Activated CD8-positive, alpha-beta T cell treated with anti-CD3 and anti-CD28 coated beads for 36 hours (primary cell): ENCODE measurements at regions of chr1 and their contacts with region 1.

Region 1: DNA sequence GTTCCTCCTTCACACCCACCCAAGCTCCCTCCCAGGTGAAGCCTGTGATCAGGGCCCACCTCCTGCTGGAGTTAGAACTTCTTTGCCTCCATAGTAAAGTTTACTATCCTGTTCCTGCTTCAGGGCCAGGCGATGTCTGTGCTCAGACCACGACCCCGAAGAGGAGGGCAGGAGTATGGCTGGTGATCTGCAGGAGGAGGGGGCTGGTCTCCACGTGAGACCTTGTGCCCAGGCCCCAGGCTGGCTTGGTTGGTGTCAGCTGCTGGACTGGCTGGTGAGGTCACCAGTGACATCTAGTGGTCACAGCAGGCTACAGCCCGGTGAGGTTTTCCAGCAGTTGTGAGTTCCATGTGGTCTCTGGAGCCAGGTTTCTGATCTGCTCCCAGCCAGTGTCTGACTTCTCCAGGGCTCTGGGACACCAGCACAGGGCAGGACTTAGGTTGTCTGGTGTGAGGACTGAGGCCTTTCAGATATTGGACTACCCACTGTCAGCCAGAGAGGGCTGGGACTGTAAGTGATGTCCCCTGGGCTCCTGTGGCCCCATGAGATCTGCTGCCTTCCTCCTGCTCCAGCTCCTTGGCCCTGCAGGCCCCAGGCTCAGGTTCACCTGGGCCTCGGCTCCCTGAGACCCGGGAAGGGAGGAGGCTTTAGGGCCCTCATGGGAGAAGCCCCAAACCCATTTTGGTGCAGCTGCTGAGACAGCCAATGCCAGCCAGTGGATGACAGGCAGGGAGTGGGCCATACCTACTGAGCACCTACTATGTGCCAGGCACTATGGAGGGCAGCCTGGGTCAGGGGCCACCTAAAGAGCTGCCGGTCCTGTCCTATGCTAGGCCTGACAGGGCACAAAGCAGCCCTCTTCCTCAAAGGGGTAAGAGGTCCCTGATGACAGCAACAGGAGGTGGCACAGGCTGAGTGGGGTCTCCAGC is 6.0 kb upstream of the UBL4B start:
- DNase-seq: peak; percentile 69
- ATAC-seq: peak; percentile 94
- H3K4me3 Mint-ChIP-seq: no peak overlapping the region
- H3K27ac Mint-ChIP-seq: no peak overlapping the region
- H3K4me1 Mint-ChIP-seq: no peaks in the 10 kb centered on the region
- H3K27me3 Mint-ChIP-seq: peaks cover 5% of the 10 kb centered on the region
- CTCF ChIP-seq: peak; percentile 82

Region 2: GRCh38 chr1:110047471-110047870 is 58.8 kb before region 1 on chr1:
- CTCF ChIA-PET with region 1: interaction called, 251 read pairs
- POLR2A ChIA-PET with region 1: interaction called, 3 read pairs
- intact Hi-C with region 1: loop called (anchors 5 kb)
- DNase-seq: no peak
- ATAC-seq: no peak
- H3K4me3 Mint-ChIP-seq: no peak overlapping the region
- H3K27ac Mint-ChIP-seq: no peak overlapping the region
- H3K4me1 Mint-ChIP-seq: no peaks in the 10 kb centered on the region
- H3K27me3 Mint-ChIP-seq: no peaks in the 10 kb centered on the region
- CTCF ChIP-seq: no peak

Region 3: DNA sequence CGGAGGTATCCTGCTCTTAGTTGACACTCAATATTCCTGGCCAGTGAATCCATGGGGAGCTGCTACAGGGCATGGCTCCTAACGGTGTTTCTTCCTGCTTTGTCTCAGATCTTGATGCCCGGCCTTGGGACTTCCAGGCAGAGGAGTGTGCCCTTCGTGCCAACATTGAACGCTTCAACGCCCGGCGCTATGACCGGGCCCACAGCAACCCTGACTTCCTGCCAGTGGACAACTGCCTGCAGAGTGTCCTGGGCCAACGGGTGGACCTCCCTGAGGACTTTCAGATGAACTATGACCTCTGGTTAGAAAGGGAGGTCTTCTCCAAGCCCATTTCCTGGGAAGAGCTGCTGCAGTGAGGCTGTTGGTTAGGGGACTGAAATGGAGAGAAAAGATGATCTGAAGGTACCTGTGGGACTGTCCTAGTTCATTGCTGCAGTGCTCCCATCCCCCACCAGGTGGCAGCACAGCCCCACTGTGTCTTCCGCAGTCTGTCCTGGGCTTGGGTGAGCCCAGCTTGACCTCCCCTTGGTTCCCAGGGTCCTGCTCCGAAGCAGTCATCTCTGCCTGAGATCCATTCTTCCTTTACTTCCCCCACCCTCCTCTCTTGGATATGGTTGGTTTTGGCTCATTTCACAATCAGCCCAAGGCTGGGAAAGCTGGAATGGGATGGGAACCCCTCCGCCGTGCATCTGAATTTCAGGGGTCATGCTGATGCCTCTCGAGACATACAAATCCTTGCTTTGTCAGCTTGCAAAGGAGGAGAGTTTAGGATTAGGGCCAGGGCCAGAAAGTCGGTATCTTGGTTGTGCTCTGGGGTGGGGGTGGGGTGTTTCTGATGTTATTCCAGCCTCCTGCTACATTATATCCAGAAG is 52.5 kb before region 1 on chr1:
- CTCF ChIA-PET with region 1: interaction called, 251 read pairs
- POLR2A ChIA-PET with region 1: interaction called, 3 read pairs
- intact Hi-C with region 1: loop called (anchors 5 kb)
- DNase-seq: peak; percentile 84
- ATAC-seq: peak; percentile 94
- H3K4me3 Mint-ChIP-seq: no peak overlapping the region
- H3K27ac Mint-ChIP-seq: no peak overlapping the region
- H3K4me1 Mint-ChIP-seq: no peaks in the 10 kb centered on the region
- H3K27me3 Mint-ChIP-seq: no peaks in the 10 kb centered on the region
- CTCF ChIP-seq: peak; percentile 94

Region 4: GRCh38 chr1:110076789-110077500 is 29.3 kb before region 1 on chr1:
- CTCF ChIA-PET with region 1: interaction called, 12 read pairs
- POLR2A ChIA-PET with region 1: no interaction called
- intact Hi-C with region 1: no loop called
- DNase-seq: no peak
- ATAC-seq: no peak
- H3K4me3 Mint-ChIP-seq: no peak overlapping the region
- H3K27ac Mint-ChIP-seq: no peak overlapping the region
- H3K4me1 Mint-ChIP-seq: no peaks in the 10 kb centered on the region
- H3K27me3 Mint-ChIP-seq: peaks cover 19% of the 10 kb centered on the region
- CTCF ChIP-seq: no peak

Region 5: DNA sequence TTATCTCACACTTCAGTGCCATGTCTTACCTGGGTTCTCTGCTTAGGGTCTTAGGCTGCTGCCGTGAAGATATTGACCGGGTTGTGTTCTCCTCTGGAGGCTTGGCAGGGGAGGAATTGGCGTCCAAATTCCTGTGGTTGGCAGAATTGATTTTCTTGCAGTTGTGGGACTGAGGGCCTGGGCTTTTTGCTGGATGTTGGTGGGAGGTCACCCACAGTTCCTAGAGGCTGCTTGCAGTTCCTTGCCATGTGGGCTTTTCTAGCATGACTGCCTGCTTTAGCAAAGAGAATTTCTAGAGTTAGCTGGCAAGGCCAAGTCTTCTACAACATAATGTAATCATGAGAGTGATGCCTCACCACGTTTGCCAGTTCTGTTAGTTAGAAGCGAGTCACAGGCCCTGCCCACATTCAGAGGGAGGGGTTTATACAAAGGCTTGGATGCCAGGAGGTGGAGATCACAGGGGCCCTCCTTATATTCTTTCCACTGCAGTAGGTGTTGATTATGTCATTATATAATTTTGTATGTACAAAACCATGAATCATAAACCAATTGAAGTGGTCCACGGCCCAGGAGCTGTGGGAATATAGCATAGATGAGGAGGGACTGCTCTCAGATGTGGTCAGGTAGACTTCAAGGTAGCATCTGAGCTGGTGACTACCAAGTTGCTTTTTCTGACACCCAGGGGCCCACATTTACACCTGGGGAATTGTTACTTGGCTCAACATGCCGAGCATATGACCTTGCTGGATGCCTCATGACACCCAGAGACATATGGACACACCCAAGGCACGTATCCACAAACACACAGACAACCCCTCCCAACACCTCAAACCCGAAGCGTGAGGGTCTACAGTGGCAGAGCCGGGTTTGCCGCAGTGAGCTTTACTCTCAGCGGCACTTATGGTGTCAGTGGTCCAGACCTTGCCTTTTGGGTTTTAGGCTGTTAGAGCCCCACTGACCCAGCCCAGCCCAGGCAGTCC is 12.6 kb after region 1 on chr1:
- CTCF ChIA-PET with region 1: interaction called, 58 read pairs
- POLR2A ChIA-PET with region 1: no interaction called
- intact Hi-C with region 1: no loop called
- DNase-seq: peak; percentile 66
- ATAC-seq: peak; percentile 89
- H3K4me3 Mint-ChIP-seq: no peak overlapping the region
- H3K27ac Mint-ChIP-seq: no peak overlapping the region
- H3K4me1 Mint-ChIP-seq: peaks cover 12% of the 10 kb centered on the region
- H3K27me3 Mint-ChIP-seq: peaks cover 8% of the 10 kb centered on the region
- CTCF ChIP-seq: no peak